Panc1 (cell line): ENCODE measurements at regions of chr1 and their contacts with region 1.

Region 1: GRCh38 chr1:87024936-87025540 is 110.6 kb downstream of the HS2ST1 start:
- DNase-seq: peak; percentile 47
- ATAC-seq: peak; percentile 96
- H3K4me3 ChIP-seq: no peak overlapping the region
- H3K27ac ChIP-seq: no peak overlapping the region
- H3K4me1 ChIP-seq: no peaks in the 10 kb centered on the region
- H3K27me3 ChIP-seq: no peaks in the 10 kb centered on the region
- CTCF ChIP-seq: peak; percentile 81

Region 2: DNA sequence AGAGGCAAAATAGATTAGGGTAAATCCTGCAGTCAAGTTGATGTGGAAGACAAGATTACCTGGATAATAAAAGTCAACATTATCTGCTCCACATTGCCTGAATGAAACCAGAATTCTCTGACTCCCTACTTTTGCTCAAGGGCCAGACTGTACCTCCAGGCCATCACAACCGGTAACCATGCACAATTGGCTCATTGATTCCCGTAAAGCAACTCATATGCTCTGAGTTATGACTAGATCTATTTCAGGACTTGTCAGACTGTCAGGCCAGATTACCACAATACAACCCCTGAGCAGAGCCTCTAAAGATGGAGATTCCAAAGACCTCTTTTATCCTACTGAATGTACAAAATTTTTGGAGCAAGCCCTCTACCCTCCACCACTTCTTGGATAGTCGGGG is 719.3 kb before region 1 on chr1:
- CTCF ChIA-PET with region 1: no interaction called
- POLR2A ChIA-PET with region 1: no interaction called
- in situ Hi-C with region 1: no loop called
- intact Hi-C with region 1: no loop called
- DNase-seq: no peak
- ATAC-seq: no peak
- H3K4me3 ChIP-seq: no peak overlapping the region
- H3K27ac ChIP-seq: no peak overlapping the region
- H3K4me1 ChIP-seq: no peaks in the 10 kb centered on the region
- H3K27me3 ChIP-seq: peaks cover 47% of the 10 kb centered on the region
- CTCF ChIP-seq: no peak

Region 3: GRCh38 chr1:86779308-86780191 is 245.5 kb before region 1 on chr1:
- CTCF ChIA-PET with region 1: interaction called, 14 read pairs
- POLR2A ChIA-PET with region 1: no interaction called
- in situ Hi-C with region 1: no loop called
- intact Hi-C with region 1: no loop called
- DNase-seq: no peak
- ATAC-seq: peak; percentile 57
- H3K4me3 ChIP-seq: no peak overlapping the region
- H3K27ac ChIP-seq: no peak overlapping the region
- H3K4me1 ChIP-seq: no peaks in the 10 kb centered on the region
- H3K27me3 ChIP-seq: no peaks in the 10 kb centered on the region
- CTCF ChIP-seq: no peak

Region 4: DNA sequence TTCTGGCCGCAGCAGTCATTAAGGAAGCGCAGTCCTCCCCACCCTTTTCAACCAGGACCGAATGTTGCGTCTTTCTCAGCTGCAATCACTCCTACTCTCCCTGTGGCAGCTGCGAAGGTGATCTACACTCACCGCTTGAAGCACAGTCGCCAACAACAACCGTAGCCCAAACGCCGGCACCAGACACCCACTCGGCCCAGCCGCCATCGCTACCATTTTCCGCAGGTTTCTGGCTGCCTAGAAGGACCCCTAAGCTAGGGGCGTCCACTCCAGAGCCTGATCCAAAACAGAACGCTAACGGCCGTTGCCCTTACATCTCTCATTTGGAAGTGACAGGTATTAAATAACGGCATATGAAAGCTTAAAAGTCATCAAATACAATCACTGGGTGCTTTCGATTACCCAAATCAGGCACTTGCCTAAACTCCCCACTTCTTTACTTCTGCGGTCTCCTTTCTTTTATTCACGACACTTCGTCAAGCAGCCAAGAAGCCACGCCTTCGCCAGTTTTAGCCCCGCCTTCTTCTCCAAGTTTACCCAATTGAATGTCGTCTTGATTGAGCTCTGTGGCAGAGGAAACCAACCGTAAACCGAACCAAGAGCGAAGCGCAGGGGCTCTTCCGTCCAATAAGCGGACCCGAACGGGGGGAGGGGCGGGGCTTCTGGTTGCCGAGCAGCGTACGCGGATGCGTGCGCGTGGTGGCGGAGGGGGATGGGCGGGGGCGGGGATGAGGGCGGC is 111.0 kb before region 1 on chr1 and contains the start of gene SELENOF:
- CTCF ChIA-PET with region 1: no interaction called
- POLR2A ChIA-PET with region 1: no interaction called
- in situ Hi-C with region 1: no loop called
- intact Hi-C with region 1: loop called (anchors 10 kb)
- DNase-seq: peak; percentile 100
- ATAC-seq: peak; percentile 95
- H3K4me3 ChIP-seq: peak within 1 kb of the TSS; percentile 99 to 100
- H3K27ac ChIP-seq: peak within 1 kb of the TSS; percentile 100
- H3K4me1 ChIP-seq: peaks cover 21% of the 10 kb centered on the region; the same call in 1 of the 2 replicates
- H3K27me3 ChIP-seq: no peaks in the 10 kb centered on the region
- CTCF ChIP-seq: no peak
- total RNA-seq, gene SELENOF: 190 TPM

Region 5: DNA sequence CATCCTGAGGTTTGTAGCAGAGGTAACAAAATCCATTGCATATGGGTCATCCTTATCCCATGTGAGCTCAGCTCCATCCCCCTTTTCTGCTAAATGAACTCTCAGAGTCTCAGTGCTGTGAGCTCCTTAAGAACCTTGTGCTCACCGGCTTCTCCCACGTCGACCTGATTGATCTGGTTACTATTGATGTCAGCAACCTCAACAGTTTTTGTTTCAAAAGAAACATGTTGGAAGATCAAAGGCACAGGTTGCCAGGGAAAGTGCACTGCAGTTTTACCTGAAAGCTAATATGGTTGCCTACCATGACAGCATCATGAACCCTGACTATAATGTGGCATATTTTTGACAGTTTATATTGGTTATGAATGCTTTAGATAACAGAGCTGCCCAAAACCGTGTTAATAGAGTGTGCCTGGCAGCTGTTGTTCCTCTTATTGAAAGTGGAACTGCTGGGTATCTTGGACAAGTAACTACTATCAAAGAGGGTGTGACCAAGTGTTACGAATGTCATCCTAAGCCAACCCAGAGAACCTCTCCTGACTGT is 20.8 kb after region 1 on chr1:
- CTCF ChIA-PET with region 1: no interaction called
- POLR2A ChIA-PET with region 1: no interaction called
- in situ Hi-C with region 1: no loop called
- intact Hi-C with region 1: no loop called
- DNase-seq: no peak
- ATAC-seq: no peak
- H3K4me3 ChIP-seq: no peak overlapping the region
- H3K27ac ChIP-seq: no peak overlapping the region
- H3K4me1 ChIP-seq: no peaks in the 10 kb centered on the region
- H3K27me3 ChIP-seq: no peaks in the 10 kb centered on the region
- CTCF ChIP-seq: no peak